PC-3 (cell line): ENCODE measurements at regions of chr20 and their contacts with region 1.

Region 1: DNA sequence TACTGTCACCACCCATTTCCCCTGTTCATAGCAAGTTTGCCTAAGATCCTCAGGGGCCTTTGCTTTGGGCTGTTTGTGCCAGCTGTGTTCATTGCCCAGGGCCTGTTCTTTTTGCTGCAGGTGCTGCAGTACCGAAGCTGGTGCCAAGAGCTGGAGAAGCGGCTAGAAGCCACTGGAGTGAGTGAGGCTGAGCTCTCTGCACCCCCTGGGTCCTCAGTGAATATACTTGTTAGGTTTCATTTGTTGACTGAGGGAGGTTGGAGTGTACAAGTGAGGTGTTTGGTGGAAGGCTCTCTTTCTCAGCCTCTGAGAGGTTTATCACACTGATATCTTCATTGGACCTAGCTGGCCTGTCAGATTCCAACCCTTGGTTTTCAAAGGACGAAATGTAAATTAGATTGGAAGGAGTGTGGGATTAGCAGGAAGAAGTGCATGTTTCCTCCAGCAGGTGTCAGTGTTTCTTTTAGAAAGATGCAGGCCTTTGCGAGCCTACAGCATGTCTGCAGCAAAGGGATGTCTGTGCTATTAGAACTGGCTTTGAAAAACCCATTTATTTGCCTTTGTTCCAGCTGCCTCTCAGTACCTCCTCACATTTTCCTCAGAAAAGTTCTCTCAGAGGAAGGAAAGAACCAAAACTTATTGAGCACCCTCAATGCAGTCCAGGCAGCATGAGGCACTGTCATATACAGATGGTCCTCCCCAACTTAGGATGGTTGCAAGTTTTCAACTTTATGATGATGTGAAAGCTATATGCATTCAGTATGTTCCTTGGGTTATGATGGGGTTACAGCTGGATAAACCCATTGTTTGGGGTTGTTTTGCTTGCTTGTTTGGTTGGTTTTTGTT is 8.3 kb downstream of the CEP250 start:
- DNase-seq: peak; percentile 85
- ATAC-seq: peak; percentile 76
- H3K4me3 ChIP-seq: no peak overlapping the region
- H3K27ac ChIP-seq: no peak overlapping the region
- H3K4me1 ChIP-seq: peaks cover 20% of the 10 kb centered on the region
- H3K27me3 ChIP-seq: no peaks in the 10 kb centered on the region
- CTCF ChIP-seq: peak; percentile 91

Region 2: DNA sequence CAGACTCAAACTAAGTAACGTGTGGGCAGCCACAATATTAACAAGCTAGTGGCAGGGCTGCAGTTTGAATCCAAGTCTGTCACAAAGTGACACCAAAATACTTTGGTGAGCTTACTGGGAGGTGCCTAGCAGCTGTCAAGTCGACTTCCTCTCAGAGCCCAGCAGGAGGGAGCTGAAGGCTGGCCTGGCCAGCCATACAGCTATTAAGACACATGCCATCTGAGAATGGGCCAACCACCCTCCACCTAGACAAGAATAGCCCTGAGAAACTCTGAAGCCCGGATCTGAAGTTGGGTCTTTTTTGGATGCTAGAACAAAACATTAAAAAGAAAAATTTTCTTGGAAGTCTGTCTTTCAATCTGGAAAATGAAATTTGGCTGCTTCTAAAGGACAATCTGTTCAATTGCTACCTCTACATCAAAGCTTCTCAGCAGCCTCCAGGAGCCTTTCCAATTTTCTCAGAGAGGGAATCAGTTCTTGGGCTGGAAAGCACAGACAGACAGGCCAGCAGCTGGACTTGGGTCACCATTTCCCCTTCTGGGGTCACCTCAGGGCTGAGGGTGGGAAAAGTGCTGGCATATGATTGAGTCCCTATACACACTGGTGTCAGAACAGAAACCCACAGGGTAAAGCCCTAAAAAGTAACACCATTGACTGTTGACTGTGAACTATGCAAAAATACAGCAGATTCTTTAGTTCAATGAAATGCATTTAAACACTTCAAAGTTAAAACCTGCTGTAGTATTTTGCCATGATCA is 94.8 kb before region 1 on chr20:
- CTCF ChIA-PET with region 1: no interaction called
- POLR2A ChIA-PET with region 1: no interaction called
- intact Hi-C with region 1: no loop called
- DNase-seq: no peak
- ATAC-seq: no peak
- H3K4me3 ChIP-seq: no peak overlapping the region
- H3K27ac ChIP-seq: no peak overlapping the region
- H3K4me1 ChIP-seq: no peaks in the 10 kb centered on the region
- H3K27me3 ChIP-seq: no peaks in the 10 kb centered on the region
- CTCF ChIP-seq: no peak

Region 3: GRCh38 chr20:35699127-35699975 is 235.7 kb after region 1 on chr20 and contains the starts of genes NFS1 and ROMO1:
- CTCF ChIA-PET with region 1: no interaction called
- POLR2A ChIA-PET with region 1: no interaction called
- intact Hi-C with region 1: loop called (anchors 5 kb)
- DNase-seq: peak; percentile 89
- ATAC-seq: peak; percentile 81
- H3K4me3 ChIP-seq: peak within 1 kb of the TSS; percentile 79
- H3K27ac ChIP-seq: peak within 1 kb of the TSS; percentile 72
- H3K4me1 ChIP-seq: peaks cover 20% of the 10 kb centered on the region
- H3K27me3 ChIP-seq: no peaks in the 10 kb centered on the region
- CTCF ChIP-seq: no peak; the same call in 1 of the 2 replicates
- total RNA-seq, gene NFS1: 71.8 and 75.8 TPM in 2 replicates
- total RNA-seq, gene ROMO1: 479 and 530 TPM in 2 replicates

Region 4: DNA sequence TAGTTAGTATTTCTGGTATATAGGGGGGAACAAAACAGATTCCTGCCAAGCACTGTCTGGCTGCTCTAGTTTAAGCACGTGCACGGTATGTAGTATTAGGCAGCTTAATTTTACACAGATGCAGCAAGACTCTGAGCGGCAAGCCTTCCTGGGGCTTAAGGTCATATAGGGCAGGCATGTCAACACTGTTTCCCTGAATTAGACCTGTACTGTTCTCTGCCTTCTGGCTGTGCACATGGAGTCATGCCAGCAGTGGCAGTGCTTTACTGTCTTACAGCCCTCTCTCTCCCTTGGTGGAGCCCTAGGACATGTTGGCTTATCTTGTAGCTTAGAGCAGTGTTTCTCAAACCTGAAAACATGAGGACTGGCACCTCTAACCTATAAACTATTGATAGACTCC is 364.8 kb after region 1 on chr20:
- CTCF ChIA-PET with region 1: no interaction called
- POLR2A ChIA-PET with region 1: interaction called, 31 read pairs
- intact Hi-C with region 1: no loop called
- DNase-seq: no peak
- ATAC-seq: no peak
- H3K4me3 ChIP-seq: no peak overlapping the region
- H3K27ac ChIP-seq: no peak overlapping the region
- H3K4me1 ChIP-seq: no peaks in the 10 kb centered on the region; the same call in 1 of the 2 replicates
- H3K27me3 ChIP-seq: no peaks in the 10 kb centered on the region
- CTCF ChIP-seq: no peak

Region 5: DNA sequence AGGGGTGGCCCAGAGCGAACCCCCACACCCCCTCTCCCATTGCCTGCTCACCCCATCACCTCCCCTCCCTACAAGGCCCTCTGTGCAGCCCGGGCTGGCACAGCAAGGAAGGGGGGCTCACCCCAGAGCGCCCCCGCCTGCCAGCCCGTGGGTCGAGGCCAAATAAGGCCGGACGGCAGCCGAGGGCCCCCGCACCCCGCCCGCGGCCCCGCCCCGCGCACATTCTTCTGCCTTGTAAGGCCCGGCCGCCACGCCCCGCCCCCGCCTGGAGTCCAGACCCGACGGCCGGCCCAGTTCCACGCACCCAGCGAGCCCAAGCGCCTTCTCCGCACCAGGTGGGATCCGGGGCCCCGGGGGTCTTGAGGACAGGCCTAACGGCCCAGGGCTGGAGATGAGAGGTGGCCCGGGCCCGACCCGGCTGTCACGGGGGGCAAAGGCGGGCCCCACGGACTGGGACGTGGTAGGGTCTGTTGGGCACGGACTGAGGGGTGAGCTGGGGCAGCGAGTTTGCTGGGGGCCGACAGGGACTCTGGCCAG is 1077.6 kb after region 1 on chr20 and contains the start of gene MYL9:
- CTCF ChIA-PET with region 1: no interaction called
- POLR2A ChIA-PET with region 1: no interaction called
- intact Hi-C with region 1: no loop called
- DNase-seq: peak; percentile 50
- ATAC-seq: peak; percentile 81
- H3K4me3 ChIP-seq: peak within 1 kb of the TSS; percentile 72
- H3K27ac ChIP-seq: no peak within 1 kb of the TSS
- H3K4me1 ChIP-seq: peaks cover 5% of the 10 kb centered on the region; the same call in 1 of the 2 replicates
- H3K27me3 ChIP-seq: no peaks in the 10 kb centered on the region
- CTCF ChIP-seq: no peak
- total RNA-seq, gene MYL9: 10.8 and 12.0 TPM in 2 replicates